HCT116 (cell line): ENCODE measurements at regions of chr1 and their contacts with region 1.

Region 1: GRCh38 chr1:167687919-167688519 is 33.8 kb upstream of the MPZL1 start:
- DNase-seq: peak; percentile 72
- ATAC-seq: peak; percentile 86
- H3K4me3 ChIP-seq: no peak overlapping the region
- H3K27ac ChIP-seq: no peak overlapping the region
- H3K4me1 ChIP-seq: no peaks in the 10 kb centered on the region
- H3K27me3 ChIP-seq: no peaks in the 10 kb centered on the region
- CTCF ChIP-seq: peak; percentile 83 to 89 (median 85)
- POLR2A ChIP-seq: no peak
- RAD21 ChIP-seq: peak; percentile 89

Region 2: DNA sequence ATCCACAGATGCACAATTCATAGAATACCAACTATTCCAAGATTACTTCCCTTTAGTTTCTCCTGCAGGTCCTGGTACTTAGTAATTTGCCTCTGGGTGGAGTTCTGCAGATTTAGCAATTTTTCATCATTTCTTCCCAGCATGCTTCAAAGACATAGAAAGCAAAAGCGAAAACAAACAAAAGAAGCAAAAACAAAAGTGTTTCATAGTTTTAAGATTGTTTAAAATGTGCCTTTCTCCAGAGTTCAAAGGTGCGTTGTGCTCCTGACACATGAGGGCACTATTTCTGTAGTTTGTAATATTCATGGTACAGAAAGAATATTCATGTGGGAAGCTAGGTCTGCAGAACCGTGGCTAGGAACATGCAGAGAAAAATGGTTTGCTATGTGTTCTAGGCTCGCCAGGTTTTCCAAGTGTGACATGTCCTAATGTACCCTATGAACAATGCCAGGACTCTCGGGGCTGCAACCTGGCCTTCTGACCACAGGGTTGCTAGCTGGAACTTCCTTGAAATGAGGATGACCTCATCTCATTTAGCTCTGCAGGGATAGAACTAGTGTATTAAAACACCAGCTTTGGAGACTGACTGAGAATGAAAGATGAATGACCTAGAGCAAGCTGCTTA is 88.0 kb before region 1 on chr1:
- CTCF ChIA-PET with region 1: interaction called, 44 read pairs
- POLR2A ChIA-PET with region 1: no interaction called
- RAD21 ChIA-PET with region 1: interaction called in 1 of 2 experiments, 6 read pairs
- intact Hi-C with region 1: loop called (anchors 1 kb)
- DNase-seq: peak; percentile 6
- ATAC-seq: no peak
- H3K4me3 ChIP-seq: no peak overlapping the region
- H3K27ac ChIP-seq: no peak overlapping the region
- H3K4me1 ChIP-seq: no peaks in the 10 kb centered on the region
- H3K27me3 ChIP-seq: no peaks in the 10 kb centered on the region
- CTCF ChIP-seq: peak in 2 of 3 experiments; percentile 42 to 53; a peak in 4 of 6 replicates
- POLR2A ChIP-seq: no peak
- RAD21 ChIP-seq: peak; percentile 73

Region 3: DNA sequence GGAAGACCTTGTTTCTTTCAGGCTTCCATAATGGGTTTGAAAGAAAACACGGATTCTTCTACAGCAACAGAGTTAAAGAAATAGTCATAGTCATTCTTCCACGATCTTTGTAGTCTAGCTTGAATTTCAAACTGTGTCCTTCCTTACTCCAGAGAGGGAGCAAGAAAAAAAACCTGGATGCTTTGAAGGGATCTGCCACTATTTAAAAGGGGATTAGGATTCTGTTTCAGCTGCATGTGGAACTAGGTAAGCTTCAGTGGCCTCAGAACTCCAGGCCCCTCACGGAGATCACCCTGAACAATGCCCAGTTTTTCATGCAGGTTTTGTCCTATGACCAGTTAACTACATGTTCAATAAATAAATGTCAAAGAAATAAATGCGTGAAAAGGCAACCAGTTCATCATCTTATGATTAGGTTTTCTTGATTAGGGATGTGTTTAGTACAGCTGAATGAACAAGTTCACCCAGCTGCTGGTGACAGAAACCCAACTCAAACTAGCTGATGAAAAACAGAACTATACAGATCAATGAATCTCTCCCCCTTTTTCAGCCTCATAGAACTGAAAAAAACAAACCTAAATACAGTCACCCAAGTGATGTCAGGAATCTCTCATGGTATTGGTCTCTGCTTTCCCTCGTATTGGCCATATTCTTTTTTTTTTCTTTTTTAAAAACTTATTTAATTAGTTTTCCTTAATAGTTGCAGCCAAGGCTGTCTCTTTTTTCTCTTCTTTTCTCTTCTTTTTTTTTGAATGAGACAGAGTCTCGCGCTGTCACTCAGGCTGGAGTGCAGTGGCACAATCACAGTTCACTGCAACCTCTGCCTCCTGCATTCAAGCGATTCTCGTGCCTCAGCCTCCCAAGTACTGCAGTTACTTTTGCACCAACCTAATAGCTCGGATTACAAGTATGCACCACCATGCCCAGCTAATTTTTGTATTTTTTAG is 19.2 kb after region 1 on chr1:
- CTCF ChIA-PET with region 1: no interaction called
- POLR2A ChIA-PET with region 1: no interaction called
- RAD21 ChIA-PET with region 1: no interaction called
- intact Hi-C with region 1: no loop called
- DNase-seq: no peak
- ATAC-seq: no peak
- H3K4me3 ChIP-seq: no peak overlapping the region
- H3K27ac ChIP-seq: no peak overlapping the region
- H3K4me1 ChIP-seq: no peaks in the 10 kb centered on the region
- H3K27me3 ChIP-seq: peaks cover 12% of the 10 kb centered on the region; the same call in 1 of the 2 replicates
- CTCF ChIP-seq: no peak
- POLR2A ChIP-seq: no peak
- RAD21 ChIP-seq: no peak